ENCODE measurements at regions of chr6 and their contacts with region 1.

Region 1: GRCh38 chr6:13614926-13615798 is at the start of gene NOL7:
- DNase-seq: peak; percentile 99
- H3K4me3 Mint-ChIP-seq: peak within 1 kb of the TSS; percentile 99
- H3K27ac Mint-ChIP-seq: peak within 1 kb of the TSS; percentile 93
- H3K4me1 Mint-ChIP-seq: peaks cover 51% of the 10 kb centered on the region
- H3K27me3 Mint-ChIP-seq: no peaks in the 10 kb centered on the region
- total RNA-seq, gene NOL7: 79.5 to 80.8 TPM

Region 2: GRCh38 chr6:13487122-13488014 is 127.8 kb before region 1 on chr6 and contains the start of gene GFOD1:
- CTCF ChIA-PET with region 1: no interaction called
- intact Hi-C with region 1: loop called (anchors 2 kb)
- DNase-seq: peak; percentile 80
- H3K4me3 Mint-ChIP-seq: peak within 1 kb of the TSS; percentile 92
- H3K27ac Mint-ChIP-seq: peak within 1 kb of the TSS; percentile 47
- H3K4me1 Mint-ChIP-seq: peaks cover 24% of the 10 kb centered on the region
- H3K27me3 Mint-ChIP-seq: peaks cover 2% of the 10 kb centered on the region
- total RNA-seq, gene GFOD1: 3.7 to 4.2 TPM

Region 3: DNA sequence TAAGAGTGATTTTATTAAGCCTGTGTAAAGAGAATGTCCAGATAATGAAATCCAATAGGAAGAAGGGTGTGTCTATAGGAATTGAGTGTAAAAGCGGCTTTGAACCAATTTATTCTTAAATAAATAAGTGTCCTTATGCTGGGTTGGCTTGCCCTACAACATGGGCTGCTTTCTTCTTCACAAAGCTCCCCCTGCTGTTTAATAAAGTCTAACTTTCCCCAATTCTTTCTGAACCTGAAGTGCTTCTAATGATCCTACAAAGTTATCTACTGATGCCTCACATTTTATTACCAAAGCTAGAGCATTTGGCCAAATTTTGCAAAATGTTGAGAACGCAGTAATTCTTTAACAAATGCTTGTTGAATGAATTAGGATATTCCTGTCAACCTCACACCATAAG is 77.1 kb before region 1 on chr6:
- CTCF ChIA-PET with region 1: no interaction called
- intact Hi-C with region 1: no loop called
- DNase-seq: no peak
- H3K4me3 Mint-ChIP-seq: no peak overlapping the region
- H3K27ac Mint-ChIP-seq: no peak overlapping the region
- H3K4me1 Mint-ChIP-seq: no peaks in the 10 kb centered on the region
- H3K27me3 Mint-ChIP-seq: no peaks in the 10 kb centered on the region

Region 4: DNA sequence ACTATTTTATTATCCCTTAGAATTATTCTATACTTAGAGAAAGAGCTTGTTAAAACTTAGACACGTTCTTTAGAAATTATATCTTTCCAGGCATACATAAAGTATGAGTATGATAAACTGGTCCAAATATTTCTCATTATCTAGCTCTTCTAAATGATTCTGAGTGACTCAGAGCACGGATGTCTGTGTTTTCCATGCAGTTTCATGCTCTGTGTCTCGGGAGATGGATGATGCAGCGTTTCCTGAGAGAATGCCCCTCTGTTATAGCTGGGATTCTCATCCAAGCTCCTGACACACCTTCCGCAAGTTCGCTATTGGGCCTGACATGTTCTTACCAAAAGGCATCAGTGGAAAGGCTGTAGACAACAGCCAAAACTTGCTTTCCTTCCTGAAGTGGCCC is 21.4 kb before region 1 on chr6:
- CTCF ChIA-PET with region 1: no interaction called
- intact Hi-C with region 1: no loop called
- DNase-seq: no peak
- H3K4me3 Mint-ChIP-seq: no peak overlapping the region
- H3K27ac Mint-ChIP-seq: no peak overlapping the region
- H3K4me1 Mint-ChIP-seq: no peaks in the 10 kb centered on the region
- H3K27me3 Mint-ChIP-seq: no peaks in the 10 kb centered on the region

Region 5: DNA sequence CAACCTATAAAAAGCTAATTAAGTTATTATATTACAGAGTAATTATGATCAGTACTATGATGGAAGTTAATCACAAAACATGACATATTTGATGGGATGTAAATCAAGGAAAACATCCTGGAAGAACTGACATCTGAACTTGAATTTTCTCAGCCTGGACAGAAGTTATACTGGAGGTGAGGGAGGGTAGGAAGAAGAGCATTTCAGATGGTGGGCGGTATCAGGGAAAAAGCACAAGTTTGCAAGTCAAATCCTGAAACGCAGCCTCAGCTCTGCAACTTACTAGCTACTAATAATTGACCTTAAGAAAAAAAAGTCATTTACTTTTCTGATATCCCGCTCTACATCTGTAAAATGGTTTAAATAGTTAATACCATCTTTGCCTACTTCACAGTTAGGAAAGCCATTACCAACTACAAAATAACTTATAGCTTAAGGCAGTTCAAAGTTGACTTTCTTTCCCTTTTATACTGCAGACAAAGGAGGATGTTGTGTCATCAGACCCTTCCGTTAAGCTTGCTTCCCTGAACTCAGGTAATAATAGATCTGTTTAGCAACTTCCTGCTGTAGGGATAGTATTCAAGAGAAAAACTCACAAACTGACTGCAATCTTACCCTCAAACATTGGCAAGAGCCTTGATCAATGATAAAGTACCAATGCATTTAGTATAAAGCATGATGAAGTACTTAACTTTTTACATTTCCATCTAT is 20.9 kb after region 1 on chr6:
- CTCF ChIA-PET with region 1: interaction called, 10 read pairs
- intact Hi-C with region 1: no loop called
- DNase-seq: no peak
- H3K4me3 Mint-ChIP-seq: peak overlapping the region; percentile 2
- H3K27ac Mint-ChIP-seq: peak overlapping the region; percentile 84
- H3K4me1 Mint-ChIP-seq: peaks cover 60% of the 10 kb centered on the region
- H3K27me3 Mint-ChIP-seq: no peaks in the 10 kb centered on the region

Region 6: GRCh38 chr6:13733178-13733887 is 118.2 kb after region 1 on chr6:
- CTCF ChIA-PET with region 1: no interaction called
- intact Hi-C with region 1: no loop called
- DNase-seq: no peak
- H3K4me3 Mint-ChIP-seq: no peak overlapping the region
- H3K27ac Mint-ChIP-seq: no peak overlapping the region
- H3K4me1 Mint-ChIP-seq: peaks cover 9% of the 10 kb centered on the region
- H3K27me3 Mint-ChIP-seq: peaks cover 5% of the 10 kb centered on the region

Region 7: DNA sequence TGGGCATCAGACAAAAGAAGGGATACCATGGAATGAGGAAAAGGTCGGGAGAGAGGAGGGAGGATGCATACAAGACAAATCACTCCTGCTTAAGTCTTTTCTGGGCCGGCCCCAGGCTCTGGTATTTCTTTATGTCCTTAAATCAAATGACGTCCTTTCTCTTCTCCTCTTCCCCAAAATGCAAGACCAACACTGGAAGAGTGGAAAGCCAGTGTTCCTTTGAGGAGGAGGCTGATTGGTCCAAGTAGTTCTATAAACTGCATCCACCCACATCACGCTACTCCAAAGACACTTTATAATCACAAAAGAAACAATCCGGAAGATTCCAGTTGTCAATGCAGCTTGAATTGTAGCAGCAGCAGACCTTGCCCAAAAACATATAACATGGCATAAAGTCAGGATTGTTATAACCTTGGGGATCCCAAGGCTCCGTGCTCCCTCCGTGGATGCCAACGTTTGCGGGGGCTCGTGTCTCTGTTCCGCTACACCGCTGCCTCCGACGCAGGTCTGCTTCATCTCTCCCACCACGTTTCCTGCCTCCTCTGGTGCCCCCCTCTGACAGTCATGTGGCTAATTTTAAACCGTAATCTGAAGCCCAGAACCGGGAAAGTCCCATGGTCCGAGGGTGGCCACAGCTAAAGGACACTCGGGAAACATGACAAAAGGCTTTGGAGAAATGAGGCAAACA is 152.1 kb after region 1 on chr6:
- CTCF ChIA-PET with region 1: interaction called, 3 read pairs
- intact Hi-C with region 1: loop called (anchors 1 kb)
- DNase-seq: peak; percentile 71
- H3K4me3 Mint-ChIP-seq: peak overlapping the region; percentile 78
- H3K27ac Mint-ChIP-seq: no peak overlapping the region
- H3K4me1 Mint-ChIP-seq: peaks cover 43% of the 10 kb centered on the region
- H3K27me3 Mint-ChIP-seq: peaks cover 1% of the 10 kb centered on the region

Region 8: GRCh38 chr6:14075095-14075503 is 459.9 kb after region 1 on chr6:
- CTCF ChIA-PET with region 1: no interaction called
- intact Hi-C with region 1: loop called (anchors 10 kb)
- DNase-seq: peak; percentile 29
- H3K4me3 Mint-ChIP-seq: peak overlapping the region; percentile 46
- H3K27ac Mint-ChIP-seq: peak overlapping the region; percentile 73
- H3K4me1 Mint-ChIP-seq: peaks cover 53% of the 10 kb centered on the region
- H3K27me3 Mint-ChIP-seq: no peaks in the 10 kb centered on the region

Region 9: DNA sequence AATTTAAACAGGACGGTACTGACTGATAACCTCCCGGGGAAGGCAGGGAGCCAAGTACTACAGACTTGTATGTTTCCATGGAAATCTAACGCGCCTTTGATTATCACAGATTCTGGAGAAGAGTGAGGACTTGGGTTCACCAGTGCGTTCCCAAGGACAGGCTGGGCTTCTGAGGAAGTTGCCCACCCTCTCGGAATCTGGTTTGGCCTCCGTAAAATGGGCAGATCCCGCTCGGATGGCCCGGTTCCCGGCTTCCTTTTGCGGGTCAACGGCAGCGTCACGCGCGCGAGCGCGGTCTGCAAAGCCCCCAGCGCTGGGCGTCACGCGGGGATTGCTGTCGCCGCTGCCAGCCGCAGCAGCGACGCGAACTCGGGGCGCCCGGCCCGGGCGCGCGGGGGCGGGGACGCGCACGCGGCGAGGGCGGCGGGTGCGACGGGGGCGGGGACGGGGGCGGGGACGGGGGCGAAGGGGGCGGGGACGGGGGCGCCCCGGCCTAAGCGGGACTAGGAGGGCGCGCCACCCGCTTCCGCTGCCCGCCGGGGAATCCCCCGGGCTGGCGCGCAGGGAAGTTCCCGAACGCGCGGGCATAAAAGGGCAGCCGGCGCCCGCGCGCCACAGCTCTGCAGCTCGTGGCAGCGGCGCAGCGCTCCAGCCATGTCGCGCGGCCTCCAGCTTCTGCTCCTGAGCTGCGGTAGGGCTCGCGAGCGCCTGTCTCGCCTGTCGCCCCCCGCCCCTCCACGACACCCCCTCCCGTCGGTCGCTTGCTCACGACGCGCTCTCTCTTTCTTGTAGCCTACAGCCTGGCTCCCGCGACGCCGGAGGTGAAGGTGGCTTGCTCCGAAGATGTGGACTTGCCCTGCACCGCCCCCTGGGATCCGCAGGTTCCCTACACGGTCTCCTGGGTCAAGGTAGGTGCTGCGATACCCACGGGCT is 502.3 kb after region 1 on chr6 and contains the start of gene CD83:
- CTCF ChIA-PET with region 1: no interaction called
- intact Hi-C with region 1: loop called (anchors 10 kb)
- DNase-seq: peak; percentile 75
- H3K4me3 Mint-ChIP-seq: peak within 1 kb of the TSS; percentile 93
- H3K27ac Mint-ChIP-seq: peak within 1 kb of the TSS; percentile 87
- H3K4me1 Mint-ChIP-seq: peaks cover 36% of the 10 kb centered on the region
- H3K27me3 Mint-ChIP-seq: peaks cover 2% of the 10 kb centered on the region
- total RNA-seq, gene CD83: 11.9 to 13.8 TPM